ENCODE measurements at regions of chr13 and their contacts with region 1.

Region 1: DNA sequence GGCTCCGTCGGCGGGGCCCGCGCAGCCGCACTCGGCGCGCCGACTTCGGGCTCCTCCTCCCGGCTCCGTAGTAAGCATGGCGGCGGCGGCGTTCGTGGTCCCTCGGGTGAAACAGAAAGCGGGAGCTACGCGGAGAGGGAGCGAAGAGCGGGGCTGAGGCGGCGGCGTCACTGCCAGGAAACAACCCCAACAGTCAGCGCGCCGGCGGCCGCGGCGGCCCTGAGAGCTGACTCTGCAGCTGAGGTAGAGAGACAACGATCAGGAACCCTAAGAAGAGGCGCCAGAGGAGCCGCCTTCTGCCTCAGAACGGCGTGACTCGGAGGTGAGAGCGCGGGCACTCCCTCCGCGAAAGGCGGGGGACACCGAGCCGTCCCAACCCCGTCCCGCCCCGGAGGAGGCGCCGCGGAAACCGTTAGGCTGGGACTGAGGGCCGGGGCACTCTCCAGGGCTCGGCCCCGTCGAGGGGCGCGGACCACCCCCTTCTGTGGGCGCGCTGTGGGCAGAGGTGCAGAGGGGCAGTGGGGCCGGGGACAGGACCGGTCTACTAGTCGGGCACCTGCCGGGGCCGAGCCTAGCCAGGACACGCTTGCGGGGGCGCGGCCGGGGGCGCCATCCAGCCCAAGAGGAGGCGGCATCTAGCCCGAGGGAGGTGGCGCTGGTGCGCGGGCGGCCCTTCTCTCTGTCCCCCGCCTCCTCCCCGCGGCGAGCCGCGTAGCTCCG is at the start of gene FNDC3A:
- DNase-seq: peak; percentile 84
- H3K4me3 ChIP-seq: peak within 1 kb of the TSS; percentile 57 to 77 (median 60)
- H3K27ac ChIP-seq: peak within 1 kb of the TSS; percentile 77
- H3K4me1 ChIP-seq: peaks cover 8% of the 10 kb centered on the region
- H3K27me3 ChIP-seq: no peaks in the 10 kb centered on the region
- CTCF ChIP-seq: no peak
- total RNA-seq, gene FNDC3A: 40.0 to 67.2 TPM

Region 2: DNA sequence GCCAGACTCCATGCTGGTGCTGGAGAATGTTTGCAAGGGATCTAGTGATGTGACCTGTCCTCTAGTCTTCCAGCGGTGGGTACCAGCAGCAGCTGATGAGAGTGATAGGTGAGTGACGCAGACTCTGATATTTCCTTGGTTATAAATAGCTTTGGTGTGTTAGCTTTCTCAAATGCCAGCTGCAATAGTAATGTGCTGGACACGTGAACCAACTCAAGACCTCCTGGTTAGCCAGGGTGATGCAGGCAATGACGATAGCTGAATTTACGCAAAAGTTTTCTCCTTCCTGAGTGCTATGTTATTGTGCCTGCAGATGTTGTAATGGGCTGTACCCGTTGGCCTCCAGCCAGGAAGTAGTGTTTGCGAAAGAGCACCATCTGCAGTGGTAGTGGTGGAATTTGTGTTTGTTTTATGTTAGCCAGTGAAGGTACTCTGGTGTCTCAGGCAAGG is 192.8 kb before region 1 on chr13:
- CTCF ChIA-PET with region 1: no interaction called
- dilution Hi-C with region 1: no loop called
- in situ Hi-C with region 1: no loop called
- intact Hi-C with region 1: loop called (anchors 10 kb)
- DNase-seq: peak; percentile 89
- H3K4me3 ChIP-seq: no peak overlapping the region
- H3K27ac ChIP-seq: no peak overlapping the region
- H3K4me1 ChIP-seq: peaks cover 17% of the 10 kb centered on the region
- H3K27me3 ChIP-seq: no peaks in the 10 kb centered on the region
- CTCF ChIP-seq: no peak

Region 3: GRCh38 chr13:48923376-48923775 is 52.6 kb before region 1 on chr13:
- CTCF ChIA-PET with region 1: no interaction called
- dilution Hi-C with region 1: no loop called
- in situ Hi-C with region 1: no loop called
- intact Hi-C with region 1: no loop called
- DNase-seq: no peak
- H3K4me3 ChIP-seq: no peak overlapping the region
- H3K27ac ChIP-seq: no peak overlapping the region
- H3K4me1 ChIP-seq: no peaks in the 10 kb centered on the region
- H3K27me3 ChIP-seq: no peaks in the 10 kb centered on the region
- CTCF ChIP-seq: no peak

Region 4: DNA sequence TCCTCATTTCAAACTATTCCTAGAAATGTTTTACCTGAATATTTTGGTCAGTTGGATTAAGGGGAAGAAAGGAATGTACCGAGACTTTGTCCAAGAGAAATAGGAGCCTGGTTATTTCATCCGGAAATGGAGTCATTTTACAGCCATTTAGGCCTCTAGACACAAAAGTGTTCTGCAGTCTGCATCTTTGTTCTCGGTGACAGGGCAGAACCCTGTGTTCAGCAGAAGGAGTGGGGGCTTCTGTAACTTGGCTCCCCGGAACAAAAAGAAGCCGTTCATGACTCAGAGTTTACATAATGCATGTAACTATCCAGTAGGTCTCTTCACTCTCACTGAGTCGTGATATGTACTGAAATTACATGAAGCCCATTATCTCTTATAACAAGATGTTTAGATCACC is 21.9 kb before region 1 on chr13:
- CTCF ChIA-PET with region 1: no interaction called
- dilution Hi-C with region 1: no loop called
- in situ Hi-C with region 1: no loop called
- intact Hi-C with region 1: loop called (anchors 1 kb)
- DNase-seq: peak; percentile 23
- H3K4me3 ChIP-seq: no peak overlapping the region
- H3K27ac ChIP-seq: no peak overlapping the region
- H3K4me1 ChIP-seq: peaks cover 17% of the 10 kb centered on the region
- H3K27me3 ChIP-seq: no peaks in the 10 kb centered on the region
- CTCF ChIP-seq: no peak

Region 5: GRCh38 chr13:49098771-49099512 is 122.9 kb after region 1 on chr13:
- CTCF ChIA-PET with region 1: no interaction called
- dilution Hi-C with region 1: no loop called
- in situ Hi-C with region 1: no loop called
- intact Hi-C with region 1: loop called (anchors 5 kb)
- DNase-seq: no peak
- H3K4me3 ChIP-seq: no peak overlapping the region
- H3K27ac ChIP-seq: peak overlapping the region; percentile 14
- H3K4me1 ChIP-seq: peaks cover 22% of the 10 kb centered on the region
- H3K27me3 ChIP-seq: no peaks in the 10 kb centered on the region
- CTCF ChIP-seq: peak; percentile 13 to 51

Region 6: GRCh38 chr13:49278211-49278610 is 302.2 kb after region 1 on chr13:
- CTCF ChIA-PET with region 1: no interaction called
- dilution Hi-C with region 1: no loop called
- in situ Hi-C with region 1: no loop called
- intact Hi-C with region 1: loop called (anchors 1 kb)
- DNase-seq: no peak
- H3K4me3 ChIP-seq: no peak overlapping the region
- H3K27ac ChIP-seq: no peak overlapping the region
- H3K4me1 ChIP-seq: no peaks in the 10 kb centered on the region
- H3K27me3 ChIP-seq: no peaks in the 10 kb centered on the region
- CTCF ChIP-seq: no peak